ENCODE measurements at regions of chr16 and their contacts with region 1.

Region 1: DNA sequence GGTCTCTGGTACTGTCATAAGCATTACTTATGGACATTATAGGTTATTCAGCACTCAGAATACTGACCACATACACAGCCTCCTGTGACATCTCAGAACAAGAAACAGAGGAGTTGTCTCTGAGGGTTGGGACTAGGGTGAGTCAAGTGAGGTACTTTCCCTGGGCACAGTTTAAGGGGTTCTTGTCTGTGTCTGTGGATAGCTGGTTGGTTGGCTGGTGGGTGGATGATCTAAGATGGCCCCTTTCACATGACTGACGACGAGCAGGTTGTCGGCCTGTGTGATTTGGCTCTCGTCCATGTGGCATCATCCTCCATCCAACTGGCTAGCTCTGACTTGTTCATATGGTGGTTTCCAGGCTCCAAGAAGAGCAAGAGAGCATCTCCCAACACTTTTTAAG is 163.9 kb downstream of the PRKCB start:
- DNase-seq: peak; percentile 85
- ATAC-seq: peak; percentile 98
- H3K4me3 Mint-ChIP-seq: no peak overlapping the region
- H3K27ac Mint-ChIP-seq: peak overlapping the region; percentile 44
- H3K4me1 Mint-ChIP-seq: peaks cover 20% of the 10 kb centered on the region
- H3K27me3 Mint-ChIP-seq: no peaks in the 10 kb centered on the region

Region 2: GRCh38 chr16:23924128-23924527 is 75.5 kb before region 1 on chr16:
- CTCF ChIA-PET with region 1: no interaction called
- POLR2A ChIA-PET with region 1: no interaction called
- intact Hi-C with region 1: loop called in 1 of 2 experiments (anchors 5 kb)
- DNase-seq: peak; percentile 30
- ATAC-seq: peak; percentile 66
- H3K4me3 Mint-ChIP-seq: no peak overlapping the region
- H3K27ac Mint-ChIP-seq: peak overlapping the region; percentile 40
- H3K4me1 Mint-ChIP-seq: peaks cover 58% of the 10 kb centered on the region
- H3K27me3 Mint-ChIP-seq: no peaks in the 10 kb centered on the region

Region 3: DNA sequence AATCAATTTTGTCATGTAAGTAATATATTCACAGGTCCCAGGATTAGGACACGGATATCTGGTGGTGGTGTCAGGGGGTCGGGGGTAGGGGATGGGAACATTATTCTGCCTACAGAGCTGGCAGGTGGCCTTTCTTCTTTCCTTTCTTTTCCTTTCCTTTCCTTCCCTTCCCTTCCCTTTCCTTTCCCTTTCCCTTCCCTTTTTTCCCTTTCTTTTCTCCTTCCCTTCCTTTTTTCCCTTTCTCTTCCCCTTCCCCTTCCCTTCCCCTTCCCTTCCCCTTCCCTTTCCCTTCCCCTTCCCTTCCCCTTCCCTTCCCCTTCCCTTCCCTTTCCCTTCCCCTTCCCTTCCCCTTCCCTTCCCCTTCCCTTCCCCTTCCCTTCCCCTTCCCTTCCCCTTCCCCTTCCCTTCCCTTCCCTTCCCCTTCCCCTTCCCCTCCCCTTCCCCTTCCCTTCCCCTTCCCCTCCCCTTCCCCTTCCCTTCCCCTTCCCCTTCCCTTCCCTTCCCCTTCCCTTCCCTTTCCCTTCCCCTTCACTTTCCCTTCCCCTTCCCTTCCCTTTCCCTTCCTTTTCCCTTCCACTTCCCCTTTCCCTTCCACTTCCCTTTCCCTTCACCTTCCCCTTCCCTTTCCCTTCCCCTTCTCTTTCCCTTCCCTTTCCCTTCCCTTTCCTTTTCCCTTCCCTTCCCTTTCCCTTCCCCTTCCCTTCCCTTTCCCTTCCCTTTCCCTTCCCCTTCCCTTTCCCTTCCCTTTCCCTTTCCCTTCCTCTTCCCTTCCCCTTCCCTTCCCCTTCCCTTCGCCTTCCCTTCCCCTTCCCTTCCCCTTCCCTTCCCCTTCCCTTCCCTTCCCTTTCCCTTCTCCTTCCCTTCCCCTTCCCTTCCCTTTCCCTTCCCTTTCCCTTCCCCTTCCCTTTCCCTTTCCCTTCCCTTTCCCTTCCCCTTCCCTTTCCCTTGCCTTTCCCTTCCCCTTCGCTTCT is 17.9 kb before region 1 on chr16:
- CTCF ChIA-PET with region 1: no interaction called
- POLR2A ChIA-PET with region 1: no interaction called
- intact Hi-C with region 1: loop called in 1 of 2 experiments (anchors 2 kb)
- DNase-seq: no peak
- ATAC-seq: no peak
- H3K4me3 Mint-ChIP-seq: no peak overlapping the region
- H3K27ac Mint-ChIP-seq: no peak overlapping the region
- H3K4me1 Mint-ChIP-seq: peaks cover 12% of the 10 kb centered on the region
- H3K27me3 Mint-ChIP-seq: no peaks in the 10 kb centered on the region